B cell (primary cell): ENCODE measurements at regions of chr12 and their contacts with region 1.

Region 1: GRCh38 chr12:54379401-54380201 is 4.9 kb downstream of the ZNF385A start:
- DNase-seq: peak; percentile 88
- ATAC-seq: peak; percentile 90
- H3K4me3 ChIP-seq: peak overlapping the region in 3 of 5 experiments; percentile 11 to 43 (median 40)
- H3K4me3 Mint-ChIP-seq: peak overlapping the region; percentile 77
- H3K27ac ChIP-seq: no peak overlapping the region
- H3K27ac Mint-ChIP-seq: peak overlapping the region; percentile 62
- H3K4me1 ChIP-seq: peaks cover 26 to 45% of the 10 kb centered on the region in 2 donors
- H3K4me1 Mint-ChIP-seq: peaks cover 35% of the 10 kb centered on the region
- H3K27me3 ChIP-seq: no peaks in the 10 kb centered on the region
- H3K27me3 Mint-ChIP-seq: no peaks in the 10 kb centered on the region
- CTCF ChIP-seq: peak; percentile 100

Region 2: GRCh38 chr12:54214553-54215406 is 164.8 kb before region 1 on chr12:
- CTCF ChIA-PET with region 1: interaction called, 29 read pairs
- POLR2A ChIA-PET with region 1: no interaction called
- intact Hi-C with region 1: no loop called
- DNase-seq: peak; percentile 95
- ATAC-seq: peak; percentile 83
- H3K4me3 ChIP-seq: peak overlapping the region; percentile 3 to 58 (median 46)
- H3K4me3 Mint-ChIP-seq: peak overlapping the region; percentile 90
- H3K27ac ChIP-seq: no peak overlapping the region
- H3K27ac Mint-ChIP-seq: peak overlapping the region; percentile 33
- H3K4me1 ChIP-seq: peaks cover 36 to 46% of the 10 kb centered on the region in 2 donors
- H3K4me1 Mint-ChIP-seq: peaks cover 44% of the 10 kb centered on the region
- H3K27me3 ChIP-seq: peaks cover 0 to 30% (median 6%) of the 10 kb centered on the region in 4 experiments
- H3K27me3 Mint-ChIP-seq: peaks cover 6% of the 10 kb centered on the region
- CTCF ChIP-seq: peak; percentile 100

Region 3: GRCh38 chr12:54251667-54252284 is 127.8 kb before region 1 on chr12:
- CTCF ChIA-PET with region 1: interaction called, 22 read pairs
- POLR2A ChIA-PET with region 1: interaction called, 6 read pairs
- intact Hi-C with region 1: no loop called
- DNase-seq: peak; percentile 63
- ATAC-seq: peak; percentile 56
- H3K4me3 ChIP-seq: no peak overlapping the region
- H3K4me3 Mint-ChIP-seq: no peak overlapping the region
- H3K27ac ChIP-seq: no peak overlapping the region
- H3K27ac Mint-ChIP-seq: no peak overlapping the region
- H3K4me1 ChIP-seq: peaks cover 0 to 4% of the 10 kb centered on the region in 2 donors
- H3K4me1 Mint-ChIP-seq: peaks cover 6% of the 10 kb centered on the region
- H3K27me3 ChIP-seq: no peaks in the 10 kb centered on the region
- H3K27me3 Mint-ChIP-seq: no peaks in the 10 kb centered on the region
- CTCF ChIP-seq: peak; percentile 77

Region 4: DNA sequence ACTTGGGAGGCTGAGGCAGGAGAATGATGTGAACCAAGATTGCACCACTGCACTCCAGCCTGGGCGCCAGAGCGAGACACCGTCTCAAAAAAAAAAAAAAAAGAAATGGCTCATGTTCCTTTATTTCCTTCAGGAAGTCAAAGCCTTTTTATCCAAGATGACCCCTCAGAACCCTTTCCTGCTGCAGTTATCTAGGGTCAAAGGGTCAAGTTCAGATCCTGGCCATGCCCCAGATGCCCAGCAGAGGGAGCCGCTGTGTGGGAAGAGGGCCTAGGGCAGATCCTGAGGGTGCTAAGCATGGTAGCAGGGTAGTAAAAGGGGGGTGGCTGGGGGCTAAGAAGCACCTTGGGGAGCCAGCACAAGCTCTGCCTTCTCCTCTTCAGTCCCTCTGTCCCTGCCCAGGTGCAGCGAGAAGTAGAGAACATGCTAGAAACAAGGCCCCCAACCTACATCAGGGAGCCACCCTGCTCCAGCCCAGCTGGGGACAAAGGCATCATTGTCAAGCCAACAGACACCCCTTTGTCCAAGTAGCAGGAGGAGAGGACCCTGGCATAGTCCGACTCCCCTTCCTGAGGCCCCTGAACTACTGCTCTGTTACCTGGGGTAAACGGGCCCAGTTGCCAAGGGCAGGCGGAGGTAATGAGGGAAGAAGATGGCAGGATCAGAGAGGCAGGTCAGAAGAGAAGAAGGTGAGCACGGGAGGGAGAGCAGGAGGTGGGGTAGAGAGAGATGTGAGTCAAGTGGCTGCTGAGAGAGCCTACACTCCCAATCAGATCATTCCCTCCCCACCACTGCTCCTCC is 85.2 kb before region 1 on chr12:
- CTCF ChIA-PET with region 1: interaction called, 24 read pairs
- POLR2A ChIA-PET with region 1: no interaction called
- intact Hi-C with region 1: no loop called
- DNase-seq: peak; percentile 59
- ATAC-seq: peak; percentile 74
- H3K4me3 ChIP-seq: no peak overlapping the region
- H3K4me3 Mint-ChIP-seq: no peak overlapping the region
- H3K27ac ChIP-seq: no peak overlapping the region
- H3K27ac Mint-ChIP-seq: no peak overlapping the region
- H3K4me1 ChIP-seq: peaks cover 15 to 18% of the 10 kb centered on the region in 2 donors
- H3K4me1 Mint-ChIP-seq: peaks cover 15% of the 10 kb centered on the region
- H3K27me3 ChIP-seq: peaks cover 0 to 16% (median 6%) of the 10 kb centered on the region in 4 experiments
- H3K27me3 Mint-ChIP-seq: peaks cover 15% of the 10 kb centered on the region
- CTCF ChIP-seq: peak; percentile 48